ENCODE measurements at regions of chr14 and their contacts with region 1.

Region 1: GRCh38 chr14:65164068-65164824 is 61.9 kb upstream of the MAX start:
- DNase-seq: peak; percentile 73

Region 2: GRCh38 chr14:65032319-65032718 is 131.9 kb before region 1 on chr14:
- in situ Hi-C with region 1: no loop called
- DNase-seq: no peak

Region 3: DNA sequence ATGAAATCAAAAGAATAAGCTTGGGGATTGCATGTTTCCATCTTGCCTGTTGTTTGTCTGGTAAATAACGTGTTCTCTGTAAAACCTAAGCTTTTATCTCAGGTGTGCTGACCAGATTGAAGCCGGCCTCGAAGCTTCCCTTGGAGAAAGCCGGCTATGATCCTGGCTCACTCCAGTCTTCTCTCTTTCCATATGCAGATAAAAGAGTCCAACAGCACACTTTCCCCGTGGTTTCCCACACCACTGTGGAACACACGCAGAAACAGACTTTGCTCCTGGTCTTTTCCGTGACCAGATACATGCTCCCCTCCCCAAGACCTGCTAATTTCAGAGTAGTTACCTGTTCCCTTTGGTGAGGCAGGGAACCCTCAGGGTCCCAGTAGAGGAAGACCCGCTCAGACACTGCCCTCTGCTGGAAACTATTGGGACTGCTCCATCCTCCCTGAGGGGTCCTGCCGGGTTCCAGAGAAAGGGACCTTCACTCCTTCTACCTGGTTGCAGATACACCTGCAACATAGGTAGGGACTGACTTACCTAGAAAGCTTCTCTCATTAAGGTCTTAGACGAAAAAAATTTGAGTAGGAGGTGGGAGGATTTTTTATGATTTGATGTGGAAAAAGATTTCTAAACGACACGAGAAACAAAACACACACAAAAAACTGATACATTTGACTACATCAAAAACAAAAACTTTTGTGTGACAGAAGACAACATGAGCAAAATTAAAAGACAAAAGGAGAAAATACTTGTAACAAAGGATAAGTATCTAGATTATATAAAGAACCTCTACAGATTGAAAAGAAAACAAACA is 906.5 kb after region 1 on chr14:
- in situ Hi-C with region 1: loop called (anchors 25 kb)
- DNase-seq: peak; percentile 49